ENCODE measurements at regions of chr18 and their contacts with region 1.

Region 1: GRCh38 chr18:9766076-9766481 is 58.0 kb downstream of the RAB31 start:
- DNase-seq: no peak
- H3K4me3 ChIP-seq: no peak overlapping the region
- H3K27ac ChIP-seq: no peak overlapping the region
- H3K4me1 ChIP-seq: no peaks in the 10 kb centered on the region
- CTCF ChIP-seq: no peak

Region 2: DNA sequence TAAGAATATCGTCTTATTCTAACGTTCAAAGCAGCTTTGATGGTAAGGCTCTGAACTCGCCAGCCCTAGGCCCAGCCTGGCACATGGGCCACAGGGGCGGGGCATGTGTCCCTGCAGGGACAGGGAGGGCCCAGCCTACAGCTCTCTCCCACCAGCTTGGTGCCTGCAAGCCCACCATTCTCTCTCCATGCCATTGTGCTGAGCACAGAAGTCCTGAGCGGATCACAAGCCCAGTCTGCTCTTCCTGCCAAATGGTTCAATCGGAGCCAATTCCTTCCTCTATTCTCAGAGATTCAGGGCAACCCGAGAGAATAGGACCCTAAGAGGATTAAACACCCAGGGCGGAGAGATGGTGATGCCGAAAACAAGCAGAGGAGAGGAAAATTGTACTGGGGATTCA is 638.1 kb after region 1 on chr18:
- CTCF ChIA-PET with region 1: interaction called, 13 read pairs
- POLR2A ChIA-PET with region 1: no interaction called
- intact Hi-C with region 1: no loop called
- DNase-seq: no peak
- H3K4me3 ChIP-seq: no peak overlapping the region
- H3K27ac ChIP-seq: no peak overlapping the region
- H3K4me1 ChIP-seq: no peaks in the 10 kb centered on the region
- CTCF ChIP-seq: no peak